OCI-LY7 (cell line): ENCODE measurements at regions of chr9 and their contacts with region 1.

Region 1: DNA sequence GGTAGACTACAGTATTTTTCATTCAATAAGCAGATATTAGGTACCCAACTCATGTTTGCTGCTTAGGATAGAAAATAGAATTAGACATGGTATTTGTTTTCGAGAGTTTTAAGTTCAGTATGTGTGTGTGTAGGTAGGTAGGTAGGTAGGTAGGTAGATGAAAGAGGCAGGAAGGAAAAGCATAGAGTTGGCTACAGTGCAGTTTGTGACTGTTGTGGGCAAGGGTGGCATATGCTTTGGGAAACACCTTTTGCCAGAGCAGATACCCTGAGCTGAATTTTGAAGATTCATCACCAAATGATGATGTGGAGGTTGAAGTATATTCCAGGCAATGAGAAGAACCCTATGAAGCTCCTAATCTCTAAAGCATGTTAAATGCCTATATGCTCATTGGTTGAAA is 20.0 kb upstream of the PCSK5 start:
- DNase-seq: no peak
- H3K4me3 ChIP-seq: no peak overlapping the region
- H3K27ac ChIP-seq: no peak overlapping the region
- H3K4me1 ChIP-seq: no peaks in the 10 kb centered on the region
- CTCF ChIP-seq: no peak

Region 2: GRCh38 chr9:75890472-75891276 is 20.2 kb after region 1 on chr9 and contains the start of gene PCSK5:
- CTCF ChIA-PET with region 1: no interaction called
- POLR2A ChIA-PET with region 1: interaction called, 3 read pairs
- intact Hi-C with region 1: loop called (anchors 2 kb)
- DNase-seq: peak; percentile 53
- H3K4me3 ChIP-seq: peak within 1 kb of the TSS; percentile 65
- H3K27ac ChIP-seq: no peak within 1 kb of the TSS
- H3K4me1 ChIP-seq: no peaks in the 10 kb centered on the region
- CTCF ChIP-seq: no peak
- total RNA-seq, gene PCSK5: not detected in 2 replicates